Common myeloid progenitor, CD34-positive (primary cell): ENCODE measurements at regions of chr5 and their contacts with region 1.

Region 1: GRCh38 chr5:173907686-173908371 is 19.7 kb downstream of the CPEB4 start:
- DNase-seq: peak in 1 of 3 donors; percentile 37
- H3K4me3 ChIP-seq: no peak overlapping the region
- H3K27ac ChIP-seq: no peak overlapping the region
- H3K4me1 ChIP-seq: peaks cover 5 to 10% (median 8%) of the 10 kb centered on the region in 4 experiments
- H3K27me3 ChIP-seq: no peaks in the 10 kb centered on the region

Region 2: DNA sequence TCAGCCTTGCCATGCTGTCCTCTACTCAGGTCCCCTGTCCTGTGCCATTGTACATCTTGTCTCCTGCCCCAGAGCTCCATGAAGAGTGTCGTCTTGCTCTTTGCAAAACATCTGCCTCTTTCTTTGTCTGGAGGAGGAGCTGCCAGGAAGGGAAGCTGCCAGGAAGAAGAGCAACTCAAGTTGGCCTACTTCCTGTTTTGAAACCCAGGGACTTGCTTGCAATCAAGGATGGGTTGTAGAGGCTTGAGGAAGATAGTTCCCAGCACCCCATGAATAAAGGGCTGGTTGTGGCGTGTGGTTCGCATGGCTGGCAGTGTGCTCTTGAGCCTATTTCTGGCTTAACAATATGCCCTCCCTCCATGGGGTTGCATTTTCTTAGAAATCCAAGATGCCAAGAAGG is 72.7 kb before region 1 on chr5:
- CTCF ChIA-PET with region 1: no interaction called
- POLR2A ChIA-PET with region 1: no interaction called
- DNase-seq: no peak
- H3K4me3 ChIP-seq: no peak overlapping the region
- H3K27ac ChIP-seq: no peak overlapping the region
- H3K4me1 ChIP-seq: peaks cover 0 to 10% (median 4%) of the 10 kb centered on the region in 4 experiments
- H3K27me3 ChIP-seq: no peaks in the 10 kb centered on the region

Region 3: GRCh38 chr5:173925448-173926071 is 17.7 kb after region 1 on chr5:
- CTCF ChIA-PET with region 1: interaction called, 11 read pairs
- POLR2A ChIA-PET with region 1: no interaction called
- DNase-seq: peak; percentile 70 to 83 (median 78)
- H3K4me3 ChIP-seq: no peak overlapping the region
- H3K27ac ChIP-seq: no peak overlapping the region
- H3K4me1 ChIP-seq: peaks cover 2 to 28% (median 22%) of the 10 kb centered on the region in 4 experiments
- H3K27me3 ChIP-seq: no peaks in the 10 kb centered on the region